Posterior vena cava (tissue), 2 donors: ENCODE measurements at regions of chr3 and their contacts with region 1.

Region 1: GRCh38 chr3:66998113-66998903 is at the start of gene KBTBD8:
- DNase-seq: peak; percentile 99
- total RNA-seq, gene KBTBD8: 1.9 to 2.3 TPM

Region 2: DNA sequence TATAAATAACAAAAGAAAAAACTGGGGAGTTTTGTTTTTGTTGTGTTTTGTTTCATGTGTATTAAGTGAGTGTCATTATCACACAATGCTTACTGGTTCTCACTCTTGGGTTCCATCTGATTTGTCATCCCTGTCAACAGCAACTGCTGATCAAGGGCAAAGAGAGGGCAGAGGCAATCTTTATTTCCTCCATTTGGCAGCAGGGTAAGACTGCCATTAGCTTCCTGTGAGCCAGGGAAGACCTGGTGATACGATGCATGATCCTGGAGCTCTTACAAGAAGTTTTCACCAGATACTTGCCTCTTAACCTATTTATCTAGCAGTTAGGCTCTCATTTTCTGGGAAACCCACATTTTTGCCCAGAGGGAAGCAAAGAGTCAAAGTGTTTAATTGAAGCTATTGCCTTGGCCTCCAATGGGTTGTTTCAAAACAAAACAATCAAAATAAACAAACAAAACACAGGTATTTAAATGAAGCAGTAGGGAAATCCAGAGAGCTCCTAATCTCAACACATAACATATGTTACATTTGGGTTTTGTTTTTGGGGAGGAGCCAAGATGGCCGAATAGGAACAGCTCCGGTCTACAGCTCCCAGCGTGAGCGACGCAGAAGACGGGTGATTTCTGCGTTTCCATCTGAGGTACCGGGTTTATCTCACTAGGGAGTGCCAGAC is 1489.4 kb before region 1 on chr3:
- intact Hi-C with region 1: no loop called
- DNase-seq: no peak

Region 3: GRCh38 chr3:67008388-67008787 is 10.1 kb after region 1 on chr3:
- intact Hi-C with region 1: loop called in 1 of 2 experiments (anchors 1 kb)
- DNase-seq: no peak

Region 4: GRCh38 chr3:67362686-67363085 is 364.4 kb after region 1 on chr3:
- intact Hi-C with region 1: loop called in 1 of 2 experiments (anchors 5 kb)
- DNase-seq: no peak